Tibial artery (tissue), 4 donors: ENCODE measurements at regions of chr1 and their contacts with region 1.

Region 1: DNA sequence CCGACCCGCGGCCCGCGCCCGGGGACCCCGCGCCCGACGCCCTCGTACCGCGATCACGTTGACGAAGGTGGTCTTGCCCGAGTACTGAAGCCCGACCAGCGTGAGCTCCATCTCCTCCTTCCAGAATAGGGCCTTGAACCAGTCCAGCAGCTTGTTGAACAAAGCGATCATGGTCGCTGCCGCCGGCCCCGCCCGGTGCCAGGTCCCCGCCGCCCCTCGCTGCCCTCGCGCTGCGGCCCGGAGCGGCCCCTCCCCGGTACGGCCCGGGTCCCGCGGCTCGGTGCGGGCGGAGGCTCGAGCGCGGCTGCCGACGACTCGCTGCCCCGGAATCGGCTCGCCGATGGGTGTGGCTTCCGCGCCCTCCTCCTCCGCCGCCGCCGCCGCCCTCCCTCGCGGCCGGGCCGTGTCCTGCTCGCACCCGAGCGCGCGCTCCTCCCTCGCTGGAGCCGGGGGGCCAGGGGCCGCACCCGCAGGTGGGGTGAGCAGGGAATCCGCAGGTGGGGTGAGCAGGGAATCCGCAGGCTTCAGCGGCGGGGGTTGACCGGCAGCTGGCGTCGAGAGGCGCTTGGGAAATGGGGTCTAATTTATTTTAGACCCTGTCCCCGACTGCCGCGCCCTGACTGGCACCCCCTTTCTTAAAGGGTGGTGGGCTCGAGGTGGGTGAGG is at the start of gene ARL8A:
- DNase-seq: peak; percentile 70 to 85
- H3K4me3 ChIP-seq: peak within 1 kb of the TSS; percentile 96
- H3K27ac ChIP-seq: peak within 1 kb of the TSS; percentile 92 to 93
- H3K4me1 ChIP-seq: peaks cover 0 to 41% (median 25%) of the 10 kb centered on the region in 4 donors
- H3K27me3 ChIP-seq: no peaks in the 10 kb centered on the region
- CTCF ChIP-seq: peak in 1 of 2 experiments; percentile 10

Region 2: DNA sequence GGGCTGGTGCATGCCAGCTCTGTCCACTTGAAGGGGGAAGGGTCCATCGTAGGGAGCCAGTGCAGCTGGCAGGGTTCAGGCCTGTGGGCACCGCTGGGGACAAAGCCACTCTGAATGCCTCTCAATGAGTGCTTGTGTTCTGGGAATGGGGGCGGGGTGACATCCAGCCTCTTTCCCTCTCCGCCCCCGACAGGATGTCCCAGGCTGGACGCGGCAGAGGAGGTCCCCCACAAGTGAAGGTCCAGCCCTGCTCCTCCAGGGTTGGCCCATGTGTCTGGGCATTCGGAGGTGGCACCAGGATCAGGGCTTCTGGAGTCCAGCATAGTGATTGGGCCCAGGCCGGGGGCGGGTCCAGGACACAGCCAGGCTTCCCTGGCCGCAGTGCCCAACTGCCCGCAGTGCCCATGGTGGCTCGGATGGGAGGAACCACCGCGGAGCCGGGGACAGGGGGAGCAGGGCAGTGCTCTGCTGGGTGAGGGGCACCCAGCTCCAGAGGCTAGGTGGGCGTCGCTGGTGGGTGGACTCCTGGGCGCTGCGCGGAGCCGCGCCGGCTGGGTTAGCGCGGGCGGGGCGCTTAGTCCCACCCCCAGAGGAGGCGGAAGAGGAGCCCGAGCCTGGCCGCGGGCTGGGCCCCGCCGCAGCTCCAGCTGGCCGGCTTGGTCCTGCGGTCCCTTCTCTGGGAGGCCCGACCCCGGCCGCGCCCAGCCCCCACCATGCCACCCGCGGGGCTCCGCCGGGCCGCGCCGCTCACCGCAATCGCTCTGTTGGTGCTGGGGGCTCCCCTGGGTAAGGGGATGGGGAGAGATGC is 256.0 kb before region 1 on chr1 and contains the start of gene SHISA4:
- intact Hi-C with region 1: loop called (anchors 10 kb)
- DNase-seq: peak; percentile 88 to 95
- H3K4me3 ChIP-seq: peak within 1 kb of the TSS; percentile 82 to 85
- H3K27ac ChIP-seq: peak within 1 kb of the TSS; percentile 80 to 95
- H3K4me1 ChIP-seq: peaks cover 0 to 80% (median 58%) of the 10 kb centered on the region in 4 donors
- H3K27me3 ChIP-seq: no peaks in the 10 kb centered on the region
- CTCF ChIP-seq: no peak

Region 3: GRCh38 chr1:202132031-202132907 is 12.3 kb before region 1 on chr1:
- intact Hi-C with region 1: no loop called
- DNase-seq: peak; percentile 83 to 89
- H3K4me3 ChIP-seq: peak overlapping the region in 1 of 2 donors; percentile 4
- H3K27ac ChIP-seq: peak overlapping the region; percentile 82 to 85
- H3K4me1 ChIP-seq: peaks cover 0 to 60% (median 40%) of the 10 kb centered on the region in 4 donors
- H3K27me3 ChIP-seq: no peaks in the 10 kb centered on the region
- CTCF ChIP-seq: no peak